Activated B cell treated with CpG ODN at 0.5 μM for 24 hours (primary cell): ENCODE measurements at regions of chr3 and their contacts with region 1.

Region 1: GRCh38 chr3:39051647-39052561 is at the starts of genes SCN11A and WDR48:
- DNase-seq: peak; percentile 80
- ATAC-seq: peak; percentile 94
- H3K4me3 Mint-ChIP-seq: peak within 1 kb of the TSS; percentile 97
- H3K27ac Mint-ChIP-seq: peak within 1 kb of the TSS; percentile 98
- H3K4me1 Mint-ChIP-seq: peaks cover 39% of the 10 kb centered on the region
- H3K27me3 Mint-ChIP-seq: no peaks in the 10 kb centered on the region
- CTCF ChIP-seq: no peak
- total RNA-seq, gene SCN11A: 0.16 and 0.20 TPM in 2 replicates
- total RNA-seq, gene WDR48: 47.7 and 48.9 TPM in 2 replicates

Region 2: GRCh38 chr3:38039101-38039898 is 1012.6 kb before region 1 on chr3 and contains the start of gene DLEC1:
- CTCF ChIA-PET with region 1: no interaction called
- POLR2A ChIA-PET with region 1: no interaction called
- intact Hi-C with region 1: loop called (anchors 5 kb)
- DNase-seq: peak; percentile 57
- ATAC-seq: peak; percentile 74
- H3K4me3 Mint-ChIP-seq: peak within 1 kb of the TSS; percentile 86
- H3K27ac Mint-ChIP-seq: peak within 1 kb of the TSS; percentile 54
- H3K4me1 Mint-ChIP-seq: peaks cover 21% of the 10 kb centered on the region
- H3K27me3 Mint-ChIP-seq: peaks cover 5% of the 10 kb centered on the region
- CTCF ChIP-seq: no peak
- total RNA-seq, gene DLEC1: 0.10 and 0.11 TPM in 2 replicates

Region 3: DNA sequence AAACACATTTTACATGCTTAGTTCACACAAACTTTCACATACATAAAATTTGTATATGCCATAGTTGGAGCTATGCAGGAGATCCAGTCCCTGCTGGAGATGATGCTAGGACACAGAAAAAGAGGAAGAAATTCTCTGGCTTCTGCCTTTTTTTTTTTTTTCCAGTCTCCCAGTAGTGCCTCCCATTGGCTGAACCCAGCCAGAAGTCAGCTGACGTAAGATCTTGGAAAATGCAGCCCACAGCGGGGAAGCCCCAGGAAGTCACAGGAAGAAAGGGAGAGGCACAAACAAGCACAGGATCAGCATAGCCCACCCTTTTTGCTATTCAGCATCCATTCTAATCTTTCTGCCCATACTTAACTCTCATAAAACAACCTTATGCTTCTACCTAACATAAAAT is 38.6 kb before region 1 on chr3:
- CTCF ChIA-PET with region 1: no interaction called
- POLR2A ChIA-PET with region 1: no interaction called
- intact Hi-C with region 1: no loop called
- DNase-seq: no peak
- ATAC-seq: no peak
- H3K4me3 Mint-ChIP-seq: no peak overlapping the region
- H3K27ac Mint-ChIP-seq: no peak overlapping the region
- H3K4me1 Mint-ChIP-seq: no peaks in the 10 kb centered on the region
- H3K27me3 Mint-ChIP-seq: peaks cover 10% of the 10 kb centered on the region
- CTCF ChIP-seq: no peak

Region 4: GRCh38 chr3:39038165-39038564 is 13.7 kb before region 1 on chr3:
- CTCF ChIA-PET with region 1: no interaction called
- POLR2A ChIA-PET with region 1: no interaction called
- intact Hi-C with region 1: no loop called
- DNase-seq: no peak
- ATAC-seq: no peak
- H3K4me3 Mint-ChIP-seq: no peak overlapping the region
- H3K27ac Mint-ChIP-seq: no peak overlapping the region
- H3K4me1 Mint-ChIP-seq: no peaks in the 10 kb centered on the region
- H3K27me3 Mint-ChIP-seq: peaks cover 17% of the 10 kb centered on the region
- CTCF ChIP-seq: no peak

Region 5: DNA sequence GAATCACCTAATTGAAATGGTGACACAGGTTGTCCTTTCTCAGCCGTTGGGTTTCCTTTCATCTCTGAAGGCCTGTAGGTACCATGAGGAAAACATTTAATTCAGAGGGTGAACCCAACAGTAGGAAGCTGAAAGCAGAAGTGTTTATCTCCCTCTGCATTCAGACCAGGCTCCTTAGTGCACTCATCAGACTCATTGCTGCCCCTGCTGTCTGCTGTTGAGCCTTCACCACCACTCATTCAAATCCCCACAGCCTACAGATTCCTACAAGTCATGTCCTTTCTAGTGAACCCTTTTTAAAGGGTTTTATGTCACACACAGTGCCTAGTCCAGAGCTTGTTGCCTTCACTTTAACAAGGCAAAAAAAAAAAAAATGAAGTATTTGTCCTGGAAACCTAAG is 13.3 kb after region 1 on chr3:
- CTCF ChIA-PET with region 1: interaction called, 3 read pairs
- POLR2A ChIA-PET with region 1: no interaction called
- intact Hi-C with region 1: loop called (anchors 1 kb)
- DNase-seq: no peak
- ATAC-seq: peak; percentile 99
- H3K4me3 Mint-ChIP-seq: no peak overlapping the region
- H3K27ac Mint-ChIP-seq: peak overlapping the region; percentile 69
- H3K4me1 Mint-ChIP-seq: peaks cover 17% of the 10 kb centered on the region
- H3K27me3 Mint-ChIP-seq: no peaks in the 10 kb centered on the region
- CTCF ChIP-seq: no peak

Region 6: GRCh38 chr3:39150799-39151631 is 99.1 kb after region 1 on chr3:
- CTCF ChIA-PET with region 1: no interaction called
- POLR2A ChIA-PET with region 1: no interaction called
- intact Hi-C with region 1: no loop called
- DNase-seq: peak; percentile 30
- ATAC-seq: no peak
- H3K4me3 Mint-ChIP-seq: peak overlapping the region; percentile 98
- H3K27ac Mint-ChIP-seq: peak overlapping the region; percentile 99
- H3K4me1 Mint-ChIP-seq: peaks cover 74% of the 10 kb centered on the region
- H3K27me3 Mint-ChIP-seq: no peaks in the 10 kb centered on the region
- CTCF ChIP-seq: no peak

Region 7: GRCh38 chr3:39180546-39181346 is 128.8 kb after region 1 on chr3:
- CTCF ChIA-PET with region 1: no interaction called
- POLR2A ChIA-PET with region 1: no interaction called
- intact Hi-C with region 1: loop called (anchors 5 kb)
- DNase-seq: peak; percentile 88
- ATAC-seq: peak; percentile 89
- H3K4me3 Mint-ChIP-seq: peak overlapping the region; percentile 73
- H3K27ac Mint-ChIP-seq: peak overlapping the region; percentile 77
- H3K4me1 Mint-ChIP-seq: peaks cover 31% of the 10 kb centered on the region
- H3K27me3 Mint-ChIP-seq: no peaks in the 10 kb centered on the region
- CTCF ChIP-seq: no peak

Region 8: GRCh38 chr3:39406368-39407258 is 354.7 kb after region 1 on chr3 and contains the start of gene RPSA:
- CTCF ChIA-PET with region 1: no interaction called
- POLR2A ChIA-PET with region 1: no interaction called
- intact Hi-C with region 1: loop called (anchors 1 kb)
- DNase-seq: peak; percentile 80
- ATAC-seq: peak; percentile 90
- H3K4me3 Mint-ChIP-seq: peak within 1 kb of the TSS; percentile 94
- H3K27ac Mint-ChIP-seq: peak within 1 kb of the TSS; percentile 96
- H3K4me1 Mint-ChIP-seq: peaks cover 48% of the 10 kb centered on the region
- H3K27me3 Mint-ChIP-seq: no peaks in the 10 kb centered on the region
- CTCF ChIP-seq: no peak
- total RNA-seq, gene RPSA: 2,697 and 2,952 TPM in 2 replicates

Region 9: GRCh38 chr3:40452876-40453730 is 1401.2 kb after region 1 on chr3:
- CTCF ChIA-PET with region 1: no interaction called
- POLR2A ChIA-PET with region 1: no interaction called
- intact Hi-C with region 1: loop called (anchors 10 kb)
- DNase-seq: peak; percentile 81
- ATAC-seq: peak; percentile 92
- H3K4me3 Mint-ChIP-seq: peak overlapping the region; percentile 96
- H3K27ac Mint-ChIP-seq: peak overlapping the region; percentile 98
- H3K4me1 Mint-ChIP-seq: peaks cover 36% of the 10 kb centered on the region
- H3K27me3 Mint-ChIP-seq: no peaks in the 10 kb centered on the region
- CTCF ChIP-seq: no peak